Caco-2 (cell line): ENCODE measurements at regions of chr5 and their contacts with region 1.

Region 1: GRCh38 chr5:179697993-179698934 is 503 bp upstream of the CANX start:
- DNase-seq: peak; percentile 99 to 100
- H3K4me3 ChIP-seq: peak overlapping the region; percentile 95
- H3K4me3 Mint-ChIP-seq: peak overlapping the region; percentile 99
- H3K27ac Mint-ChIP-seq: peak overlapping the region; percentile 93
- H3K4me1 ChIP-seq: peaks cover 8% of the 10 kb centered on the region
- H3K4me1 Mint-ChIP-seq: peaks cover 8% of the 10 kb centered on the region
- H3K27me3 ChIP-seq: no peaks in the 10 kb centered on the region
- H3K27me3 Mint-ChIP-seq: no peaks in the 10 kb centered on the region
- CTCF ChIP-seq: no peak

Region 2: GRCh38 chr5:179559284-179560252 is 138.7 kb before region 1 on chr5:
- CTCF ChIA-PET with region 1: no interaction called
- POLR2A ChIA-PET with region 1: no interaction called
- intact Hi-C with region 1: loop called (anchors 2 kb)
- DNase-seq: peak; percentile 99
- H3K4me3 ChIP-seq: peak overlapping the region; percentile 97
- H3K4me3 Mint-ChIP-seq: peak overlapping the region; percentile 91
- H3K27ac Mint-ChIP-seq: peak overlapping the region; percentile 91
- H3K4me1 ChIP-seq: no peaks in the 10 kb centered on the region
- H3K4me1 Mint-ChIP-seq: peaks cover 8% of the 10 kb centered on the region
- H3K27me3 ChIP-seq: no peaks in the 10 kb centered on the region
- H3K27me3 Mint-ChIP-seq: no peaks in the 10 kb centered on the region
- CTCF ChIP-seq: no peak

Region 3: DNA sequence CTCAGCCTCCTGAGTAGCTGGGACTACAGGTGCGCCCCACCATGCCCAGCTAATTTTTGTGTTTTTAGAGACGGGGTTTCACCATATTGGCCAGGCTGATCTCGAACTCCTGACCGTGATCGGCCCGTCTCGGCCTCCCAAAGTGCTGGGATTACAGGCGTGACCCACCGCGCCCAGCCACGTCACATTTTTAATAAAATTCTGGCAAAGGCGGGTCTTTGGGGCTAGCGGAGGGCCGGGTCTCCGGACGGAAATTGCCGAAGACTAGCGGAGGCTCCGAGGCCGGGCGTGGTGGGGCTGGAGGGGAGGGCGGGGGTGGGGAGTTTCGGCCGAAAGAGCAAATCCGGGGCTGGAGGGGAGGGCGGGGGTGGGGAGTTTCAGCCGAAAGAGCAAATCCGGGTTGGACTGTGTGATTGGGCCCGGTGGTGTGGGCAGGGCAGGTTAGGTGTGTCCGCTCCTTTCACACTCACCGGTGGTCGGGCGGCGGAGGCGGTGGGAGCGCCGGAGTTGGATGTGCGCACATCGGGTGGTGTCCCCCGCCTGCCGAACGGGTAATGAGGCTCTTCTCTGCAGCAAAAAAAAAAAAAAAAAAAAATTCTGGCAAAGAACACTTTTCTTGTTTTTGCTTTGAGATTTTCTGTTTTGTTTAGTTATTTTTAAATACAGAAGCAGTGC is 120.8 kb before region 1 on chr5:
- CTCF ChIA-PET with region 1: no interaction called
- POLR2A ChIA-PET with region 1: no interaction called
- intact Hi-C with region 1: no loop called
- DNase-seq: no peak
- H3K4me3 ChIP-seq: no peak overlapping the region
- H3K4me3 Mint-ChIP-seq: no peak overlapping the region
- H3K27ac Mint-ChIP-seq: no peak overlapping the region
- H3K4me1 ChIP-seq: no peaks in the 10 kb centered on the region
- H3K4me1 Mint-ChIP-seq: no peaks in the 10 kb centered on the region
- H3K27me3 ChIP-seq: no peaks in the 10 kb centered on the region
- H3K27me3 Mint-ChIP-seq: no peaks in the 10 kb centered on the region
- CTCF ChIP-seq: no peak

Region 4: DNA sequence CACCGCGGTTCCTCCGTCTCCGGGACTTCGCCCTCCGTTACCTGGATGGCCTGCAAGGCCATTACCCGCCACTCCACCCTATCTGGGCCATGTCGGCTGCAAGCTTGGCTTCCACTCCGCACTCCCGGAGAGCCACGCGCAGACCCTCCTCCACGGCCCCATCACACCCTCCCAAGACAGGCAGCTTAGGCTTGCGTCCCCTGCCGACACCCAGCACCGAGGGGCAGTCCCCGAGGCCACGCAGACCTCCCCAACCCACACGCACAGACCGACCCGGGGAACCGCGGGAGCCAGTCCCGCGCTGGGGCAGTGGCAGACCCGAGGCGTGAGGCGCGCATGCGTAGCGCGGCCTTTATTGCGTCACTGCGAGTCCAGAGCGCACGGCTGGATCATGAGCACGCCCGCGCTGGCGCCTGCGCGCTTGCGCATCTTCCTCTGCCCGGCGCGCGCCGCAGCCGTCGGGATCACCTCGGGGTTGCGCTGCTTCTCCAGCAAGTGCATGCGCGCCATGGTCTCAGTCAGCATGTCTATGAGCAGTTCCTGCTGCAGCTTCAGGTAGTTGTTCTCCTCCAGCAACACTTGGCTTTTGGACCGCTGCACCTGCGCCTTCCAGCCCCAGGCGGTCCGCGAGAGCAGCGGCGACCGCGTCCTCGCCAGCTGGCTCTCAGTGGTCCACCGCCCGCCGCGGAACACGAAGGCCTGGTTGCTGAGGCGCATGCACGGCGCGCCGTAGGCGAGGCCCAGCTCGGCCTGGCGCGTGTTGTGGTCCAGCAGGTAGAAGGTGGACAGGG is 19.8 kb before region 1 on chr5:
- CTCF ChIA-PET with region 1: no interaction called
- POLR2A ChIA-PET with region 1: no interaction called
- intact Hi-C with region 1: loop called (anchors 1 kb)
- DNase-seq: peak; percentile 95 to 96
- H3K4me3 ChIP-seq: peak overlapping the region; percentile 72
- H3K4me3 Mint-ChIP-seq: peak overlapping the region; percentile 98
- H3K27ac Mint-ChIP-seq: peak overlapping the region; percentile 97
- H3K4me1 ChIP-seq: peaks cover 11% of the 10 kb centered on the region
- H3K4me1 Mint-ChIP-seq: peaks cover 21% of the 10 kb centered on the region
- H3K27me3 ChIP-seq: no peaks in the 10 kb centered on the region
- H3K27me3 Mint-ChIP-seq: no peaks in the 10 kb centered on the region
- CTCF ChIP-seq: no peak